ENCODE measurements at regions of chr4 and their contacts with region 1.

Region 1: GRCh38 chr4:142861351-142861750 is 15.2 kb upstream of the INPP4B start:
- DNase-seq: no peak
- ATAC-seq: no peak
- H3K4me3 Mint-ChIP-seq: no peak overlapping the region
- H3K27ac Mint-ChIP-seq: no peak overlapping the region
- H3K4me1 Mint-ChIP-seq: no peaks in the 10 kb centered on the region
- H3K27me3 Mint-ChIP-seq: peaks cover 2% of the 10 kb centered on the region

Region 2: DNA sequence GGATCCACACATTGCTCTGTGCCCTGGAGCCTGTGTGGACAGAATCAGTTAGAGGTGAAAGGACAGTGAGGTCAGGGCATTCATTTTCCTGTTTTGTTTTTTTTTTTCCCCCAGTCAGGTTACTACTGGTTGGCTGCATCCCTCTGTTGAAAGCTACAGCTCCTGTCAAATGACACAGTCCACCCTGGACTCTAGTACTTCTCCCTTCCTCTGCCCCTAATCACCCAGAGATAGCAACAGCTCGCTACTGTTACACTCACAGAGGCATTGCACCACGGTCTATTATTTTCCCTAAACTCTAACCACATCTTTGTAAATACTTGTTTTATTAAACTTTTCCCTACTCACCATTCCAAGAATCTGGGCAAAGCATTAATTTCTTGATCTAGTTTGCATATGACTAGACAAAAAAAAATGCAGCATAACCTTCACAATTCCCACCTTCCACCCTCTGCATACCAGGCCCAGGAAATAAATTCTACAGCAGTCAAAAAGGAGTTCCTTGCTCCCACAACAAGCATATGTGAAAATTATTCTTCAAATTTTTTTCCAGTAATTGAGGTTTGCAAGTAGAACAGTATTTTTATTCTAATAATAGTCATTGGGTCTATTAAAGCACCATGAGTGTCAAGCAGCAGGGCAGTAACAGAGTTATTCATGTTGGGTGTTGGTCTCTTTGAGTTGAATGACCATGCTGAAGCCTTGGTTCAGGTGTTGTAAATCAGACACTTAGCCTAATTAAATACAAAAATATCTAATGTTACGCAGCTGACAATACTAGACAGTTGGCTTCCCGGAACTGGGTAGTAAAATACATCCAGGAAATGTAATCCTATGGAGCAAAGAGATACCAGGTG is 344.5 kb before region 1 on chr4:
- CTCF ChIA-PET with region 1: no interaction called
- POLR2A ChIA-PET with region 1: no interaction called
- intact Hi-C with region 1: no loop called
- DNase-seq: no peak
- ATAC-seq: no peak
- H3K4me3 Mint-ChIP-seq: no peak overlapping the region
- H3K27ac Mint-ChIP-seq: no peak overlapping the region
- H3K4me1 Mint-ChIP-seq: no peaks in the 10 kb centered on the region
- H3K27me3 Mint-ChIP-seq: no peaks in the 10 kb centered on the region

Region 3: GRCh38 chr4:142886546-142886945 is 25.2 kb after region 1 on chr4:
- CTCF ChIA-PET with region 1: no interaction called
- POLR2A ChIA-PET with region 1: no interaction called
- intact Hi-C with region 1: no loop called
- DNase-seq: no peak
- ATAC-seq: no peak
- H3K4me3 Mint-ChIP-seq: no peak overlapping the region
- H3K27ac Mint-ChIP-seq: no peak overlapping the region
- H3K4me1 Mint-ChIP-seq: no peaks in the 10 kb centered on the region
- H3K27me3 Mint-ChIP-seq: no peaks in the 10 kb centered on the region

Region 4: DNA sequence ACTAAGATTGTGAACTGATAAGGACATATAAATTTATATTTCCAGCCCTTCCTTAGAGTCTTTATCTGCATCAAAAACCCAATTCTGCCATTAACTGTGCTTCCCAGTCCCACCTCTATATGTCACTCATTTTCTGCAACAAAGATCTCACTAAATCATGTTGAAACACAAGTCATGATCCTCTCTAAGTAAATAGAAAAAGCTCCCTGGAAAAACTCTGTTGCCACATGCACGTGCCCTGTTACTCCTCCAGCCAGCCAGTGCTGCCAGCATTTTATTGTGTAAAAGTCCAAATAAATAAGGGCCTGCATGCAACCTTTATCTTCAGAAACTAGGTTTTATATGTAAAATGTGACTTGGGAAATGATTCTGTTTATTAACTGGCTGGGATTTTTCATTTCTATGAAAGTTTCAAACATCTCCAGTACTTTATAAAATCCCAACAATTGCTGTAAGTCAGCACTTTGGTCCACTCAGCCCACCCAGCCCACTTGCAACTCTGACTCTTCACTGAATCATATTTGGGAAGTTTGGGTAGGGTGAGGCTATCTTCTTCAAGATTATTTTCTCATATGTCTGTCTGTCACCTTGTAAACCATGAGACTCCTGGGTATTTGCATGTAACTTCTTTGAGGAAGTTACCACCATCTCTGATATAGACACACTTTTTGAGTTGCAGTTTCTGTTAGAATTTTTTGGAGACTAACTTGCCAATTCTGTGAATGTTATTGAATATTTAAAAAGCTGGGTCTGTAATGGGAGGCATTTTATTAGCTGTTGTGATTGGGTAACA is 612.2 kb after region 1 on chr4:
- CTCF ChIA-PET with region 1: no interaction called
- POLR2A ChIA-PET with region 1: no interaction called
- intact Hi-C with region 1: loop called in 1 of 2 experiments (anchors 10 kb)
- DNase-seq: no peak
- ATAC-seq: no peak
- H3K4me3 Mint-ChIP-seq: no peak overlapping the region
- H3K27ac Mint-ChIP-seq: no peak overlapping the region
- H3K4me1 Mint-ChIP-seq: no peaks in the 10 kb centered on the region
- H3K27me3 Mint-ChIP-seq: peaks cover 4% of the 10 kb centered on the region

Measured in activated CD4-positive, alpha-beta T cell treated with anti-CD3 and anti-CD28 coated beads for 36 hours (primary cell).